Head of caudate nucleus (tissue), 42 donors: ENCODE measurements at regions of chr13 and their contacts with region 1.

Region 1: GRCh38 chr13:27620377-27621115 is at the start of gene LNX2:
- DNase-seq: peak; percentile 95 to 100 (median 99)

Region 2: DNA sequence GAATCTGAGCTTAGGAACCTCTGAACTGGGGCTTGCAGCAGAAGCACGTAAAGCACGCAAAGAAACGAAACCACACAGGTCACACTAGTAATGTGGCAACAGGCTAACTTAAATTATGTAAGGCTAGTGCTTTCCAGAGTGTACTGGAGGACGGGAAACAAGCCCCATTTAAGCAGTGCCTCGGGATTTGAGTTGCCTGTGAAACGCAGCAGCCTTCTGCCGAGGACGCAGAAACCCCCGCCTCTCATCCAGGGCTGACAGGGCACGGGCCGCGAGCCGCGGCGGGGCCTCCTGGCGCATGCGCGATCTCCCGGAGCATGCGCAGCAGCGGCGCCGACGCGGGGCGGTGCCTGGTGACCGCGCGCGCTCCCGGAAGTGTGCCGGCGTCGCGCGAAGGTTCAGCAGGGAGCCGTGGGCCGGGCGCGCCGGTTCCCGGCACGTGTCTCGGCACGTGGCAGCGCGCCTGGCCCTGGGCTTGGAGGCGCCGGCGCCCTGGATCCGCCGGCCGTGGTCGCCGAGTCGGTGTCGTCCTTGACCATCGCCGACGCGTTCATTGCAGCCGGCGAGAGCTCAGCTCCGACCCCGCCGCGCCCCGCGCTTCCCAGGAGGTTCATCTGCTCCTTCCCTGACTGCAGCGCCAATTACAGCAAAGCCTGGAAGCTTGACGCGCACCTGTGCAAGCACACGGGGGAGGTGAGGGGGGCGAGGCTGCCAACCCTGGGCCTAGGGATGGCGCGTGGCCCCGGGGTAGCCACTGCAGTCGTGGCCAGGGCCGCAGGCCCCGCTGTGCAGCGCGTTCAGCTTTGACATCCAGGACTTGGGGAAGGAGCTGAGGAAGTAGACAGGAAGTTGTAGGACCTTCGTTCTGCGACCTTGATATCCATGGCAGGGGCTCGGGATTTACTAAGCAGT is 196.0 kb before region 1 on chr13 and contains the start of gene GTF3A:
- intact Hi-C with region 1: loop called (anchors 10 kb)
- DNase-seq: peak; percentile 48 to 90 (median 80)

Region 3: DNA sequence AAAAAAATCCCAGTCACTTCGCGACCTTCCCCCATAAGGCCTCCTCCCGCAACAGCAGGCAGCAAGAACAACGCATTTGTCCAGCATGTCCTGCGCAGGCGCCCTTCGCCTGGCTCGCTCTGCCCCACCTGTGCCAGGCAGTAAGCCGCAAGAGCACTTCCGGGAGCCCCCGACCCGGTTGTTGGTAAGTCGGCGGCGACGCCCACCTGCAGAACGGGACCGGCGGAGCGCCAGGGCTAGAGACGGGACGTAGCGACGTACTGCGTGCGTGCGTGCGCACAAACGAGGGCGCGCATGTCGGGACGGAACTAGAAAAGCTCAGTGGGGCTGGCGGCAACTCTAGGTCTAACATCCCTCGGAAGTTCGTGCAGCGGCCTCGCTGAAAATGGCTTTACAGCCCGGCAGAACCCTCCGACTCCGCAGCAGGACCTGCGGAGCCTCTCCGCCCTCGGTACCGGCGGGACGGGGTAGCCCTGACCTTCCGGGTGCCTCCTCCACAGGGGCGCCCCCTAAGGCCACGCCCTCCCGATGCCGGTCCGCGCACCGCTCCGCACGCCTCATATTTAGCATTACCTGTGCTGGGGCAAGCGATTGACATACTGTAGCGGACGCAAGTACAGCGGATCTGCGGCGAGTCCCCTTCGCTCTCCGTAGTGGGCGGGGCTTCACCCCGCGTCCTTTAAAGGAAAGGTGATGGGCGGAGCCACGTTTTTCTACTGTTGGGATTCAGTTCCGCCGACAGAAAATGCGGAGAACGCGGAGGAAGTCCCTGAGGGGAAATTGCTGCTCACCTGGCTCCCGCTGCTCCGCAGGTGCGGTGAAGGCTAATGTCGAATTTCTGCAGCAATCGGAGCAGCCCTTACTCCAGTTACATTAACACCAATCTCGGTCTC is 170.4 kb before region 1 on chr13 and contains the start of gene MTIF3:
- intact Hi-C with region 1: loop called (anchors 10 kb)
- DNase-seq: peak; percentile 88 to 97 (median 95)